ENCODE measurements at regions of chr9 and their contacts with region 1.

Region 1: DNA sequence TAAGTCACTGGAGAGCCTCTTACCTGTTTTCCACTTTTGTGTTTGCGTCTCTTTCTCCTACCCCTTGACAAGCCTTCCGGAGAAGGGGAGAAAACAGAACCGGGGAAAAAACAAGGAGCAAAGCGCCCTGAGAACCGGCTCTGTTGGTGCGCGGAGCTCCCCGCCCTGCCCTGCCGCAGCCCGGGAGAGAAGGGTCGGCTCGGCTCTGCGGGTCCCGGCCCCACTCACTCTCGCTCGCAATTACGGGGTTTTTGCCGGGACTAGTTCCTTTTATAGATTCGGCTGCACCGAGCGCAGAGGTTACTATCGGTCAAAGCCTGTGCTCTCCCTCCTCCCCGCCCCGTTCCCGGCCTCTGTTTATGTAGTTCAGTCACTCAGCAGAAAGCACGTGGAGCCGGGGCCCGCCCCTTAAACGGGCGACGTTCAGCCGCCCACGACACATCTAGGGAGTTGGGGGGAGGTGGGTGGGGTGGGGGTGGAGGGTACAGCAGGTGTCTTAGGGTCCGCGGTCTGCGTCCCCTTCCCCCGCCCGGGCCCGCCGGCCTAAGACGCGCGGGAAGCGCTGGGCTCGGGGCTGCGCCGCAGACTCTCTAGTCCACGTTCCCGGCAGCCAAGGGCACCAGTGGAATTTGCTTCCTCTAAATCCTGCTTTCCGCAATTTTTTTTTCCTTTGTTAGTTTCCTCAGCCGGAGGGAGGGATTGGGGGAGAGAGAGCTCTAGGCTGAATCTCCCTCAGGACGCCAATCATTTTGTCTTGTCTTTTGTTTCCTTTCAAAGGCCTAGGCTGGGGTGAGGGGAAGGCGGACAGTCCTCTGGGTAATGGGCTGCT is at the start of gene ABCA1:
- DNase-seq: peak; percentile 92
- H3K4me3 ChIP-seq: peak within 1 kb of the TSS; percentile 58 to 66
- H3K27ac ChIP-seq: peak within 1 kb of the TSS; percentile 66 to 68
- H3K4me1 ChIP-seq: no peaks in the 10 kb centered on the region
- H3K27me3 ChIP-seq: no peaks in the 10 kb centered on the region
- CTCF ChIP-seq: no peak
- POLR2A ChIP-seq: peak; percentile 80
- total RNA-seq, gene ABCA1: 11.0 to 63.7 TPM

Region 2: GRCh38 chr9:104868687-104869404 is 59.3 kb before region 1 on chr9:
- intact Hi-C with region 1: loop called (anchors 2 kb)
- DNase-seq: peak; percentile 25
- H3K4me3 ChIP-seq: no peak overlapping the region
- H3K27ac ChIP-seq: peak overlapping the region; percentile 22 to 51
- H3K4me1 ChIP-seq: peaks cover 4% of the 10 kb centered on the region
- H3K27me3 ChIP-seq: no peaks in the 10 kb centered on the region
- CTCF ChIP-seq: no peak
- POLR2A ChIP-seq: no peak

Region 3: DNA sequence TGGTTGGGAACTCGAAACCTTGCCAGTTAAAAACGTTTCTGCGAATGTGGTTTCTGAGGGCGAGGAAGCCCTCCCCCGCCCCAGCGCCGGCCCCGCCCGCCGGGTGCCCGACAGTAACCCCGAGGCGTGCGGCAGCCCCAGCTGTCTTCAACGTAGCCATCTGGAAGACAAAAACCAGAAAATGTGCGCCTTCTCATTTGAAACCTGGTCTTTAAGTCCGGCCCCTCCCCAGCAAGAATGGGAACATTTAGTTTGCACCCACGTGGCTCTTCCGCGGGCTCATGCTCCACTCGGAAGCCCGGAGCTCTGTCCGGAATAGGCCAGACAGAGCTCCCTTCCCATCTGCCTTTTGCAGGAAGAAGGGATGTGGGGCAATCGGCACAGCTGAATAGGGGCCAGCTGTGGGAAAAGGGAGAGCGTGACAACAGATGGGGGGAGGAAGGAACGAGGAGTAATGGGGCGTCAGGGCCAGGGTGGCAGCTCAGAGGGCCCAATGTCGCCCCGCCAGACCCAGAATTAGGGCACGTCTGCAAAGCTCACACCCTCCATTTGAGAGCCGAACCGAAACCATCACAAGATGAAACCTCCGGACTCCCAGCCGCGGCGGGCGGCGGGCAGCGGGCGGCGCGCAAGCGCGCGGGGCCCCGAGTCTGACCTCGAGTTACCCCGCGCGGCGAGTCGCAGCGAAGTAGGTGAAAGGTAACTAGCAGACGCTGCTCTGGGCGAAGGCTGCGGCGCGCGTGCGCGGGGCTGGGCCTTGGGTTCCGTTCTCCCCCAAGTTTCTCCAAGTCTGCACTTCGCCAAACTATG is 63.2 kb after region 1 on chr9:
- intact Hi-C with region 1: loop called (anchors 2 kb)
- DNase-seq: peak; percentile 80
- H3K4me3 ChIP-seq: peak overlapping the region; percentile 46 to 61
- H3K27ac ChIP-seq: peak overlapping the region; percentile 79 to 82
- H3K4me1 ChIP-seq: no peaks in the 10 kb centered on the region
- H3K27me3 ChIP-seq: no peaks in the 10 kb centered on the region
- CTCF ChIP-seq: peak in 1 of 4 experiments; percentile 6
- POLR2A ChIP-seq: no peak

Region 4: GRCh38 chr9:105157130-105157583 is 229.0 kb after region 1 on chr9:
- intact Hi-C with region 1: loop called (anchors 2 kb)
- DNase-seq: peak; percentile 26
- H3K4me3 ChIP-seq: no peak overlapping the region
- H3K27ac ChIP-seq: no peak overlapping the region
- H3K4me1 ChIP-seq: no peaks in the 10 kb centered on the region
- H3K27me3 ChIP-seq: no peaks in the 10 kb centered on the region
- CTCF ChIP-seq: peak in 3 of 4 experiments; percentile 54 to 66 (median 60)
- POLR2A ChIP-seq: no peak

Region 5: GRCh38 chr9:105414947-105415661 is 487.0 kb after region 1 on chr9:
- intact Hi-C with region 1: loop called (anchors 10 kb)
- DNase-seq: peak; percentile 58
- H3K4me3 ChIP-seq: no peak overlapping the region
- H3K27ac ChIP-seq: no peak overlapping the region
- H3K4me1 ChIP-seq: no peaks in the 10 kb centered on the region
- H3K27me3 ChIP-seq: no peaks in the 10 kb centered on the region
- CTCF ChIP-seq: peak; percentile 78 to 87 (median 84)
- POLR2A ChIP-seq: no peak